Left ventricle myocardium inferior (tissue), 1 donor: ENCODE measurements at regions of chr1 and their contacts with region 1.

Region 1: DNA sequence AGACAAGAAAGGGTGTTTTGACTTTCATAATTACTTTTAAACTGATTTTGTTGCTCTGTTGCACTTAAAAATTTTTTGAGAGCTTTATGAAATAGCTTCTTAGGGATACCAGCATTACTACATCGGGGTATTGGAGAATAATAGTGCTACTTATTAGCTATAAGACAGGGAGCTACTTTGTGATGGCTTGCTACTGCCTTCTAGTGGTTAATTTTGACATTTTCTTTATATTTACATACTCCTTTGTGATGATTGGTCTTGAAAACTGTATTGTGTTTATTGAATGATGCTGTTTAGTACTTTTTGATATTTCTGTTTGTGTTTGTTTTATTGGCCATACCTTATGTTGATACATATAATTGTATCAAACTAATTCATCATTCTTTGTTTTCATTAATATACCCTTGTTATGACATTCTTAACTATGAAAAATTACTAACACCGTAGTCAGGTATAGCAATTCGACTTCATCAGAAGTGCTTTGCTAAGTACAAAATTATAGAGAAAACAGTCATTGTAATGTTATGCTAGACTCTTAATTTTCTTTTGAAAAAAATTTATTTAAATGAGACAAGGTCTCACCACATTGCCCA is 85.5 kb downstream of the CLIC4 start:
- DNase-seq: no peak
- H3K4me3 ChIP-seq: no peak overlapping the region
- H3K27ac ChIP-seq: peak overlapping the region; percentile 13
- H3K4me1 ChIP-seq: peaks cover 62% of the 10 kb centered on the region
- H3K27me3 ChIP-seq: no peaks in the 10 kb centered on the region
- CTCF ChIP-seq: peak; percentile 94

Region 2: DNA sequence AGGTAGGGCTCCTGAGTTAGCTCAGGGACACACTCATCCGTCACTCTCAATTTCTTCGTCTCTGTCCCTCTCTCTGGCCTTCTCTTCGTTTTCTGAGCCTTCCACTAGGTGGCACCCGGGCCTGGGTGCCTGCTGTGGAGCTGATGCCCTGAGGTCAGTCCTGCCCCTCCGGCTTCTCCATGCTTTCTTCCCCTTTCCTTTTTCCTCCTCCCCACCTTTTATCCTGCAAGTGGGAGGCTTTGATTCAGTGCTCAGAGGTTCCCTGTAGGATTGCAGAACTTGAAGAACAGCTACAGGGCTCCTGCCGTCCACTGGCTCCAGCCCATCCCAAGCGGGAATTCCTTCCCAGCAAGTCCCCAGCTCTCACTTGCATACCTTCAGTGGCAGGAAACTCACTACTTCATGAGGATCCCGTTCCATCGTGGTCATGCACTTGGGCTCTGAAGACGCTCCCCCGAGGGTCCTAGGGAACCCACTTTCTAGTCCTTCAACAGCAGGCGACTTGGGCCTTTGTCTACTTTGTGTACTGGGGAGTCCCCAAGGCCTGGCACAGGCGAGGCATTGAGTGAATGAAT is 142.1 kb before region 1 on chr1:
- intact Hi-C with region 1: loop called (anchors 2 kb)
- DNase-seq: peak; percentile 70
- H3K4me3 ChIP-seq: no peak overlapping the region
- H3K27ac ChIP-seq: peak overlapping the region; percentile 27
- H3K4me1 ChIP-seq: peaks cover 24% of the 10 kb centered on the region
- H3K27me3 ChIP-seq: no peaks in the 10 kb centered on the region
- CTCF ChIP-seq: peak; percentile 92

Region 3: DNA sequence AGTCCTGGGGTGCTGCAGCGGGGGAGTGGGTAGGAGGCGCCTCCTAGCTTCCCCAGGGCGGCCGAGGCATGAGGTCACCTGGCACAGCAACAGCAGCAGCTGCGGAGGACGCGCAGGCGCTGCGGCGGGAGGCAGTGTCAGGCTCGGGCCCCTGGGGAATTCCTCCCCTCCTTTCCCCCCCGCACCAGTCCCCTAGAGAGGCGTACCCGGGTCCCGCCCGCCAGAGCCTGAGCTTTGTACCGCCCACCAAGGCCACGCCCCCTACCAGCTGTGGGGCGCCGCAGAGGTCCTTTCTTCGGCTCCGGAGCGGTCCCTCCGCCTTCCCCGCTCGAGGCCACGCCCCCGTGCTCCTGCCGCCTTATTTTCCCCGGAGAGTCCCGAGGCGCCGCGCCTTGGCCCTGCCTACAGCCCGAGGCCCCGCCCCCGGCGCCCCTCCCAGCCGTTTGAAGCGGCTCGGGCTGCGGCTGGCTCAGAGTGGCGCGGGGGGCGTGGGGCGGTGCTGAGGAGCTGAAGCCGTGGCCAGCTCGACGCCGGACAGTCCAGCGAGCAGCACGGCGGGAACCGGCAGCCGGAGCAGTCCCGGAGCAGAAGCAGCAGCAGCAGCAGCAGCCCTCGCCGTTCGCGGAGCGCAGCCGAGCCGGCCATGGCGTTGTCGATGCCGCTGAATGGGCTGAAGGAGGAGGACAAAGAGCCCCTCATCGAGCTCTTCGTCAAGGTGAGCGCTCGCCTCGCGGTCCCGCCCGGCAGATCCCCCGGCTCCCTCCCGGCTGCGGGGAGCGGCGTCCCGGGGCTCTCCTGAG is 85.7 kb before region 1 on chr1 and contains the start of gene CLIC4:
- intact Hi-C with region 1: loop called (anchors 2 kb)
- DNase-seq: peak; percentile 100
- H3K4me3 ChIP-seq: peak within 1 kb of the TSS; percentile 98
- H3K27ac ChIP-seq: peak within 1 kb of the TSS; percentile 98
- H3K4me1 ChIP-seq: peaks cover 75% of the 10 kb centered on the region
- H3K27me3 ChIP-seq: no peaks in the 10 kb centered on the region
- CTCF ChIP-seq: peak; percentile 55
- total RNA-seq, gene CLIC4: 325 TPM

Region 4: GRCh38 chr1:24759492-24759891 is 71.3 kb before region 1 on chr1:
- intact Hi-C with region 1: no loop called
- DNase-seq: no peak
- H3K4me3 ChIP-seq: no peak overlapping the region
- H3K27ac ChIP-seq: no peak overlapping the region
- H3K4me1 ChIP-seq: peaks cover 77% of the 10 kb centered on the region
- H3K27me3 ChIP-seq: no peaks in the 10 kb centered on the region
- CTCF ChIP-seq: no peak

Region 5: GRCh38 chr1:25022361-25023189 is 191.8 kb after region 1 on chr1:
- intact Hi-C with region 1: no loop called
- DNase-seq: peak; percentile 46
- H3K4me3 ChIP-seq: no peak overlapping the region
- H3K27ac ChIP-seq: peak overlapping the region; percentile 19
- H3K4me1 ChIP-seq: peaks cover 15% of the 10 kb centered on the region
- H3K27me3 ChIP-seq: peaks cover 21% of the 10 kb centered on the region
- CTCF ChIP-seq: no peak